Activated CD4-positive, alpha-beta T cell treated with anti-CD3 and anti-CD28 coated beads, Interleukin-2, amount 10 ng/mL, durations not matched to agents 24 days and 14 days (primary cell): ENCODE measurements at regions of chr19 and their contacts with region 1.

Region 1: GRCh38 chr19:47296036-47296435 is 13.6 kb upstream of the C5AR1 start:
- DNase-seq: peak; percentile 95
- H3K4me3 Mint-ChIP-seq: no peak overlapping the region
- H3K27ac Mint-ChIP-seq: no peak overlapping the region
- H3K4me1 Mint-ChIP-seq: peaks cover 5% of the 10 kb centered on the region
- H3K27me3 Mint-ChIP-seq: no peaks in the 10 kb centered on the region

Region 2: DNA sequence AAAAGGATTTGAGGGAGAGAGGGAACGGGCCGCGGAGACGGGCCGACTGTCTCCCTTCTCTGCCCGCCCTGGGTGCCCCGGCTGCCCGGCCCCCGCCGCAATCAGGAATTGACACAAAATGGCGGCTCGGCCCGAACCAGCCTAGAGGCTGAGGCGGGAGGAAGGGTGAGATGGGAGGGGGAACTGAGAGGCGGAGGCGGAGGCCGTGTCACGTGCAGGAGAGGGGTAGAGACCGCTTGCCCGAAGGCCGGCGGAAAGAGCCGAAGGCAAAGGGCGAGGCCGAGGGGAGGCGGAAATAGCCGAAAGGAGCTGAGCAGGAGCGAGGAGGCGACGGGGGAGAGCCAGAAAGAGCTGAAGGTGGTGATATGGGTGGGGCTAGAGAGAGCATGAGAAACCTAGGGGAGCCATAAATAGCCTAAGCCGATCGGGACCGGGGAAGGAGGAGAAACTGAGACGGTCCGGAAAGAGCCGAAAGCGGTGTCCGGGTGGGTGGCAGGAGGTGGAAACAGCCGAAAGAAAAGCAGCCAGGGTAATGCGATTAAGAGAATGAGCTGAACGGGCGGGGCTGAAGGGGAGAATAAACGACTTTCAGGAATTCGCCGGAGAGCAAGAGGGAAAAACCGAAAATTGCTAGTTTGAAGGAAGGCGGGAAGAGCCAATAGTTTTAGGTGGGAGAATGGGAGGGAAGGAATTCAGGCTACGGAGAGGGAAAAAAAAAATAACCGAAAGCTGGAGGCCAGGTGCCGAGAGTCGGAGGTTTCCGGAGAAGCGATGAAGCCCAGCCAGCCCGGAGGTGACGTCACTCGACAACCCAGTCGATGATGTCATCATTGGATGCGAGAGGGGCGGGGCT is 182.8 kb before region 1 on chr19 and contains the start of gene ZC3H4:
- intact Hi-C with region 1: no loop called
- DNase-seq: peak; percentile 100
- H3K4me3 Mint-ChIP-seq: peak within 1 kb of the TSS; percentile 96
- H3K27ac Mint-ChIP-seq: peak within 1 kb of the TSS; percentile 100
- H3K4me1 Mint-ChIP-seq: peaks cover 31% of the 10 kb centered on the region
- H3K27me3 Mint-ChIP-seq: no peaks in the 10 kb centered on the region
- total RNA-seq, gene ZC3H4: 97.3 and 103 TPM in 2 replicates

Region 3: GRCh38 chr19:47209319-47210179 is 86.5 kb before region 1 on chr19:
- intact Hi-C with region 1: no loop called
- DNase-seq: no peak
- H3K4me3 Mint-ChIP-seq: no peak overlapping the region
- H3K27ac Mint-ChIP-seq: peak overlapping the region; percentile 49
- H3K4me1 Mint-ChIP-seq: peaks cover 8% of the 10 kb centered on the region
- H3K27me3 Mint-ChIP-seq: no peaks in the 10 kb centered on the region

Region 4: DNA sequence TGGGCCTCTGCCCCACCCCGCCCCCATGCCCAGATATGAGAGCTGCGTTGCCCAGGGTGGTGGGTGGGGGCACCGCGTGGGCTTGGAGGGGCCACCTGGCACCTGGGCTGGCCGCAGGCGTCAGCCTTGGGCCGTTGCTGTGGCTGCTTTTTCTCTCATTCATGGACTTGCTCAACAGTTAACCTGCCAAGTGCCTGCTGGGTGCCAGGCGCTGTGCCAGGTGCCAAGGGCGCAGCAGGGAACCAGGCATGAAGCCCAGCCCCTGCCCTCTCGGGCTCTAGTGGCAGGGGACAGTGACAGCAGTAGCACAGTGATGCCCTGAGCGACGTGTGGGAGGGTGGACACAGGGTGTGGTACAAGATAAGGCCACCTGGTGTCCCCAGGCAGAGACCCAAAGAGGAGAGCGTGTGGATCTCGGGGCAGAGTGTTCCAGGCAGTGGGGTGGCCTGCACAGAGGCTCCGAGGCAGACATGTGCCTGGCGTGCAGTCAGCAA is 81.2 kb after region 1 on chr19:
- intact Hi-C with region 1: no loop called
- DNase-seq: no peak
- H3K4me3 Mint-ChIP-seq: no peak overlapping the region
- H3K27ac Mint-ChIP-seq: no peak overlapping the region
- H3K4me1 Mint-ChIP-seq: peaks cover 7% of the 10 kb centered on the region
- H3K27me3 Mint-ChIP-seq: no peaks in the 10 kb centered on the region

Region 5: DNA sequence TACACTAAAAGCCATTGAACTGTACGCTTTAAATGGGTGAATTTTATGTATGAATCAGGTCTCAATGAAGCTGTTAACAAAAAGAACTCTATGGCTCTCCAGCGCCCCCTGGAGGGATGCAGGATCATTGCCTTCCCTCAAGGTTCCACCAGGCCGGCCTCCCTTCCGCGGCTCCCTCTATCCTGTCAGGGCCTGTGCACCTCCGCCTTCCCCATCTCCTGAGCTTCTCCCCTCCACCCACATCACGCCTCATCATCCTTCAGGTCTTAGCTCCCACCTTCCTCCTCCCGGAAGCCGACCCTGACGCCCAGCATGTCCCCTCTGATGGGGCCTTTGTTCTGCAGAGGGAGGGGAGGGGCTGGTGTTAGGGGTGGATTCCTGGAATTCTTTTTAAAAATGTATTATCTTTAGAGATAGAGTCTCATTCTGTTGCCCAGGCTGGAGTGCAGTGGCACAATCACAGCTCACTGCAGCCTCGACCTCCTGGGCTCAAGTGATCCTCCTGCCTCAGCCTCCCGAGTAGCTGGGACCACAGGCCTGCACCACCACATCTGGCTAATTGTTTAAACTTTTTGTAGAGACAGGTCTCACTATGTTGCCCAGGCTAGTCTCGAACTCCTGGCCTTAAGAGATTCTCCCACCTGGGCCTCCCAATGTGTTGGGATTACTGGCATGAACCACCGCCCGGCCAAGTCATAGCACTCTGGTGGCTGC is 95.6 kb after region 1 on chr19:
- intact Hi-C with region 1: loop called (anchors 1 kb)
- DNase-seq: peak; percentile 94
- H3K4me3 Mint-ChIP-seq: no peak overlapping the region
- H3K27ac Mint-ChIP-seq: no peak overlapping the region
- H3K4me1 Mint-ChIP-seq: peaks cover 4% of the 10 kb centered on the region
- H3K27me3 Mint-ChIP-seq: peaks cover 4% of the 10 kb centered on the region

Region 6: DNA sequence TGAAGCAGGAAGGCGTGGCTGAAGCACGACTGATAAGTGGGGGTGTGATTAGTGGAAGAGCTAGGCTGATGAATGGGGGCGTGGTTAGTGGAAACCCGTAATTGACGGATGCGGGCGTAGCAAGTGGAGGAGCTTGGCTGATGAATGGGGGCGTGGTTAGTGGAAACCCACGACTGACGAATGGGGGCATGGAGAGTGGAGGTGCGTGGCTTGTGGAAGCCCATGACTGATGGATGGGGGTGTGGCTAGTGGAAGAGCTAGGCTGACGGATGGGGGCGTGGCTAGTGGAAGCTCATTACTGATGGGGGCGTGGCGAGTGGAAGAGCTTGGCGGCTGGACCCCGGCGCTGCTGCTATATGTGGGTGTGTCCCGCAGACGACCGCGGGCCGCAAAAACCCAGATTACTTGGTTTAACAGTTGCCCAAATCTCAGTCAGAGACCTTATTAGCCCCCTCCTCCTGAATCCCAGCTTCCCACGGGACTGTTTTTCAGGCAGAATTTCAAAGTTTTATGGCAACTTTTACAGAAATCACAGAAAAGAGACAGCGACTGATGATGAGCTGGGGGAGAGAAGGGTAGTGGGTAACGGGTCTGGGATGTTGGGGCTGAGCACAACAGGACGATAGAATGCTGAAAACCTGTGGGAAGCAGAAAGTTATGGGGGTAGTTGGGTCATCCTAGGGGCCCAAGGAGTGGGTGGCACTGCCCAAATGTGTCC is 132.3 kb after region 1 on chr19:
- intact Hi-C with region 1: loop called (anchors 1 kb)
- DNase-seq: peak; percentile 95
- H3K4me3 Mint-ChIP-seq: no peak overlapping the region
- H3K27ac Mint-ChIP-seq: no peak overlapping the region
- H3K4me1 Mint-ChIP-seq: peaks cover 20% of the 10 kb centered on the region
- H3K27me3 Mint-ChIP-seq: peaks cover 27% of the 10 kb centered on the region

Region 7: GRCh38 chr19:47707135-47707925 is 411.3 kb after region 1 on chr19:
- intact Hi-C with region 1: loop called (anchors 10 kb)
- DNase-seq: peak; percentile 92
- H3K4me3 Mint-ChIP-seq: no peak overlapping the region
- H3K27ac Mint-ChIP-seq: no peak overlapping the region
- H3K4me1 Mint-ChIP-seq: peaks cover 7% of the 10 kb centered on the region
- H3K27me3 Mint-ChIP-seq: peaks cover 5% of the 10 kb centered on the region